HAP-1 (cell line): ENCODE measurements at regions of chr3 and their contacts with region 1.

Region 1: DNA sequence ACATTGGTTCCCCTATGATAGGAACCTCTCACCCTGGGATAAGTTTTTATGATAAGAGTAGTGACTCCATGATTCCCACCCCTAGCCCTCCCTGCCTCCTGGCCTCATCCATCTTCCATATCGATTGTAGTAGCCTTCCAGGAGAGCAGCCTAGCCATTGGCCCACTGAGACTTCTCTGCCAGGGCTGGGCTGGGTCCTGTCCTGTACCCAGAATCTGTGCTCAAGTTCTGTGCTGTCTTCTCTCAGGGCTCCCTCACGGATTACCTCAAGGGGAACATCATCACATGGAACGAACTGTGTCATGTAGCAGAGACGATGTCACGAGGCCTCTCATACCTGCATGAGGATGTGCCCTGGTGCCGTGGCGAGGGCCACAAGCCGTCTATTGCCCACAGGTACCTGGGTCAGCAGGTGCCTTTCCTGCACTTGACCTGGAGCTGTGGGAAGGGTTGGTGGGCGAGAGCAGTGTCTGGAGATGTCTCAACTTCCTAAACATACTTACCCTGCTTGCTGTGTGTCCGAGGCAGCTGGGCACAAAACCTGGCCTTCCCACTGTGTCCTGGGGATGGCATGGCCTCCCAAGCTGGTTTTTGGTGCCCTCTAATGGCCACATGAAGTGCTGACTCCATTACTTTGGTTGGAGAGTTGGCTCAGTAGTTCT is 16.6 kb upstream of the EXOG start:
- DNase-seq: peak; percentile 17 to 67
- H3K4me3 ChIP-seq: no peak overlapping the region
- H3K4me1 ChIP-seq: no peaks in the 10 kb centered on the region
- H3K27me3 ChIP-seq: no peaks in the 10 kb centered on the region

Region 2: DNA sequence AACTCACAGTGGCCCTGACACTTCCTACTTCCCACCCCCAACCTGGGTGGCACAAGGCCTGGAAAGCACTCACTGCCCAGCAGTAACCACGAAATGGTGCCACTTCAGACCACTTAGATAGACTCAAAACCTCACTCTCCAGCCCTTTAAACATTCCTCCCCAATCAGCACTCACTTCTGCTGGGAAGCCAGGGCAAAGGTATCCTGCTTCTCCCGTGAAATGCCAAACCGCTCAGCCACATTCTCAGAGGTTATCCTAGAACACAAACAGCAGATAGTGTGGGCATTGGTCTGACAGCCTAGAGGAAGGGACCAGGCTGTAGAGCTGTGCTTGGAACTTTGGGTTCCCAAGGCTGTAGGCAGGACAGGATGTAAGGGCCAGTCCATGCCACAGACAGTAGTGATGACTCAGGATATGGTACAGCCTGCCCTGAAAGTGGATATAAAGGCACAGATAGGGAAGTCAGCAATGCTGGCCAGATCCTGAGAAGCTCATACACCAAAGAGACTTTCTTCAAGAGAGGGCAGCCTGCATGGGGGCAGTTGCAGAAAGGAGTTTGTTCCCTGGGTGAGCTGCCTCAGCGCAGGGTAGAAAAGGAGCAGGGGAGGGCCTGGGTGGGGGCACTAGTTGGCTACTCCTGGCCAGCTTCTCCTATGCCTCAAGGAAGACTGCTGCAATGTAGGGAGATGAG is 351.8 kb before region 1 on chr3:
- in situ Hi-C with region 1: loop called (anchors 10 kb)
- DNase-seq: no peak
- H3K4me3 ChIP-seq: no peak overlapping the region
- H3K4me1 ChIP-seq: no peaks in the 10 kb centered on the region
- H3K27me3 ChIP-seq: no peaks in the 10 kb centered on the region

Region 3: DNA sequence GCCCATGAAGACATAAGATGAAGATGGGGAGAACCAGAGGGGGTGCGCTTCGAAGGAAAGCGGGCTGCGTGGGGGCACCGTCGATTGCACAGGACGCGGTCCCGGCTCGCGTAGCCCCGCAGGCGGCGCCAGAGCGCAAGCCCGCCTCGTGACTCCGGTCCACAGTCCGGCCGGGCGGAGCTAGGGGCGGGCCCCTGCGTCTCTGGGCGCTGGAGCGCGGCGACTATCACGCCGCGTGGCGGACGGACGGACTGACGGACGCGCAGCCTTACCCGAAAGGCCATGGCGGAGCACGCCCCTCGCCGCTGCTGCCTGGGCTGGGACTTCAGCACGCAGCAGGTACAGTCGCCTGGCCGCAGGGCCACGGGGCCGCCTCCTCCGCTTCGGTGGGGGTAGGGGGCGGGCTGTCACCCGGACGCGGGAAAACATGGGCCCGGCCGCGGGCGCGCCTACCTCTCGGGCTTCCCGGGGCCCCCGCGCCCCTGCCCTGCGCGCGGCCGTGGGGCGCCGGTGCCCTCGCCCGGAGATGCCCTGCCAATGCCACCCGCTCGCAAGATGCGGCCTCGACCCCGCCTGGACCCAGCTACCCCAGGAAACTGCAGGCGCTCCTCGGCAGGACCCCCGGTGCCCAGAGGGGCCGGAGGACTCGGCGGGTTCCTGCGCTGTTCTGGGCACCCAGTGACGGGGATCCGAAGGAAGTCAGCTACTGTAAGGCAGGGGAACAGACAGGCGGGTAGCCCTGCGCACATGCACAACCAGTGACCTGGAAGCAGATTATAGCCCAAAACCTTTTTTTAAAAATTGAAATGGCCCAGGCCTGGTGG is 132.8 kb before region 1 on chr3 and contains the start of gene XYLB:
- in situ Hi-C with region 1: loop called (anchors 10 kb)
- DNase-seq: peak; percentile 72 to 90
- H3K4me3 ChIP-seq: peak within 1 kb of the TSS; percentile 64
- H3K4me1 ChIP-seq: peaks cover 9% of the 10 kb centered on the region; the same call in 1 of the 2 replicates
- H3K27me3 ChIP-seq: no peaks in the 10 kb centered on the region

Region 4: DNA sequence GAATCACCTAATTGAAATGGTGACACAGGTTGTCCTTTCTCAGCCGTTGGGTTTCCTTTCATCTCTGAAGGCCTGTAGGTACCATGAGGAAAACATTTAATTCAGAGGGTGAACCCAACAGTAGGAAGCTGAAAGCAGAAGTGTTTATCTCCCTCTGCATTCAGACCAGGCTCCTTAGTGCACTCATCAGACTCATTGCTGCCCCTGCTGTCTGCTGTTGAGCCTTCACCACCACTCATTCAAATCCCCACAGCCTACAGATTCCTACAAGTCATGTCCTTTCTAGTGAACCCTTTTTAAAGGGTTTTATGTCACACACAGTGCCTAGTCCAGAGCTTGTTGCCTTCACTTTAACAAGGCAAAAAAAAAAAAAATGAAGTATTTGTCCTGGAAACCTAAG is 585.6 kb after region 1 on chr3:
- in situ Hi-C with region 1: no loop called
- DNase-seq: peak; percentile 31 to 36
- H3K4me3 ChIP-seq: no peak overlapping the region
- H3K4me1 ChIP-seq: no peaks in the 10 kb centered on the region
- H3K27me3 ChIP-seq: no peaks in the 10 kb centered on the region